Activated CD4-positive, alpha-beta T cell treated with anti-CD3 and anti-CD28 coated beads for 36 hours (primary cell): ENCODE measurements at regions of chr5 and their contacts with region 1.

Region 1: DNA sequence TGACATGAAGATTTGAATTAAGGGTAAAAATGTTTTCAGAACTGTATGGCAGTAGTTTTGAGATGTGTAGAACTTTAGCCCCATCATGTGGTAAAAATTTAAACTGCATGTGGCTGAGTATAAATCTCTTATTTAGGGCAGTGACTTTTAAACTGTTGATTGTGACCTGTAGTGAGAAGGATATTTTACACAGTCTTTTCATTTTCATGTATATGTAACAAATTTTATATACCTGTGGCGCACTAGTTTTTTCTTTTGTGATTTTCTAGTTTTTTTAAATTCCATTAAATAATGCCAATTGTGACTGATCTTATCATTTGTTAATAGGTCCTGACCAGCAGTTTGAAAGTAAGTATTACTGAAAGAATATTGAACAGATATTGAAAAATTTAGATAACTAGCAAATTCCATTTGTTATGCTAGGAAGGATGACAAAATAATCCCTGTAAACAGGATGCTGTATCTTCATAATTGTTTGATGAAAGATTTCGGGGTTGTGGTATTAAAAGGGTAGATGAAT is 47.2 kb downstream of the GPBP1 start:
- DNase-seq: no peak
- ATAC-seq: peak; percentile 54
- H3K4me3 Mint-ChIP-seq: no peak overlapping the region
- H3K27ac Mint-ChIP-seq: peak overlapping the region; percentile 73
- H3K4me1 Mint-ChIP-seq: peaks cover 46% of the 10 kb centered on the region
- H3K27me3 Mint-ChIP-seq: no peaks in the 10 kb centered on the region

Region 2: GRCh38 chr5:56900858-56901578 is 320.1 kb before region 1 on chr5:
- CTCF ChIA-PET with region 1: interaction called, 8 read pairs
- POLR2A ChIA-PET with region 1: no interaction called
- intact Hi-C with region 1: loop called (anchors 1 kb)
- DNase-seq: peak; percentile 36
- ATAC-seq: peak; percentile 54
- H3K4me3 Mint-ChIP-seq: no peak overlapping the region
- H3K27ac Mint-ChIP-seq: no peak overlapping the region
- H3K4me1 Mint-ChIP-seq: peaks cover 5% of the 10 kb centered on the region
- H3K27me3 Mint-ChIP-seq: no peaks in the 10 kb centered on the region

Region 3: GRCh38 chr5:56909294-56910209 is 311.6 kb before region 1 on chr5 and contains the start of gene SETD9:
- CTCF ChIA-PET with region 1: interaction called, 7 read pairs
- POLR2A ChIA-PET with region 1: no interaction called
- intact Hi-C with region 1: loop called in 1 of 2 experiments (anchors 2 kb)
- DNase-seq: peak; percentile 97
- ATAC-seq: peak; percentile 92
- H3K4me3 Mint-ChIP-seq: peak within 1 kb of the TSS; percentile 90
- H3K27ac Mint-ChIP-seq: peak within 1 kb of the TSS; percentile 94
- H3K4me1 Mint-ChIP-seq: peaks cover 20% of the 10 kb centered on the region
- H3K27me3 Mint-ChIP-seq: peaks cover 5% of the 10 kb centered on the region
- total RNA-seq, gene SETD9: 5.4 to 6.8 TPM

Region 4: GRCh38 chr5:56951946-56952691 is 269.0 kb before region 1 on chr5 and contains the start of gene MIER3:
- CTCF ChIA-PET with region 1: interaction called, 5 read pairs
- POLR2A ChIA-PET with region 1: interaction called, 3 read pairs
- intact Hi-C with region 1: loop called (anchors 1 to 2 kb)
- DNase-seq: peak; percentile 90
- ATAC-seq: peak; percentile 95
- H3K4me3 Mint-ChIP-seq: peak within 1 kb of the TSS; percentile 85
- H3K27ac Mint-ChIP-seq: peak within 1 kb of the TSS; percentile 81
- H3K4me1 Mint-ChIP-seq: peaks cover 20% of the 10 kb centered on the region
- H3K27me3 Mint-ChIP-seq: peaks cover 16% of the 10 kb centered on the region
- total RNA-seq, gene MIER3: 15.4 to 16.0 TPM

Region 5: GRCh38 chr5:57137401-57137800 is 83.7 kb before region 1 on chr5:
- CTCF ChIA-PET with region 1: interaction called, 9 read pairs
- POLR2A ChIA-PET with region 1: no interaction called
- intact Hi-C with region 1: loop called (anchors 1 to 2 kb)
- DNase-seq: no peak
- ATAC-seq: no peak
- H3K4me3 Mint-ChIP-seq: no peak overlapping the region
- H3K27ac Mint-ChIP-seq: no peak overlapping the region
- H3K4me1 Mint-ChIP-seq: no peaks in the 10 kb centered on the region
- H3K27me3 Mint-ChIP-seq: no peaks in the 10 kb centered on the region